Thyroid gland (tissue), 4 donors: ENCODE measurements at regions of chr15 and their contacts with region 1.

Region 1: DNA sequence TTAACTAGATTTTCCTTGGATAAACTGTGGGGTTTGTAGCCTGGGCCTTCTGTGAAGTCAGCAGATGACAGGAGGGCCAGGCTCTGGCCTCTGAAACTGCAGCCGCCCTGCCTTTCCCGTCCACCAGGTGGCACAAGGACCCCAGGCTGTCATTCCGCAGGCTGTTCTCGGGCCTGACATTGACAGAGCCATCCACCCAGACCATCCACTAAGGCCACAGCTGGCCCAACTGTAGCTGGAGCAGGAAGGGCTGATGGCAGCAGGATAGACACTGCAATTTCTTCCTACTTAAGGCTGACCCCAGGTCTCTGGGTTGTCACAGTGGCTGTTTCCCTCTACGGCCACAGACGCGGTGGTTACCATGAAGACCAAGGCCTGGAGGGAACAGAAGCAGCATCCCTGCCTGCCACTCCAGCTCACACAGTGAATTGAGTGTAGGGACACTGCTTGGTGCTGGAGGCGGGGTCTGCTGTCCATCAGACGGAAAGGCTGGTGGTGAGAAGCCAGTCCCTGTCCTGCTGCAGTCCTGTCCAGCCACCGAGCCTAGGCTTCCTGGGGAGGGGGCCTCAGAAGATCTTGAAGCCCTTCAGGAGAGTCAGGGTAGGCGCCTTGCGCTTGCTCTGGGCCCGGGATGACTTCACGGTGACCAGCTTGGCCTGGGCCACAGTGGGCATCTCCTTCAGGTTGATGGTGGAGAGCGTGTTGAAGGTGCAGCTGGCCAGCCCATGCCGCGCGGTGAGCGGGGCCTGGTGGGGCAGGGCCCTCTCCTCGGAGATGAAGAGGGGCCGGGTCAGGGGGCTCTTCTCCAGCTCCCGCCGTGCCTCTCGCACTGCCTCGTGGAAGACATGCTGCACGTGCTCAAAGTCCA is 9.4 kb downstream of the SLC51B start:
- DNase-seq: peak; percentile 79 to 82
- H3K4me3 ChIP-seq: no peak overlapping the region
- H3K27ac ChIP-seq: no peak overlapping the region
- H3K4me1 ChIP-seq: peaks cover 0 to 8% of the 10 kb centered on the region in 2 donors
- H3K27me3 ChIP-seq: no peaks in the 10 kb centered on the region
- CTCF ChIP-seq: peak; percentile 66 to 97 (median 90)
- POLR2A ChIP-seq: no peak

Region 2: DNA sequence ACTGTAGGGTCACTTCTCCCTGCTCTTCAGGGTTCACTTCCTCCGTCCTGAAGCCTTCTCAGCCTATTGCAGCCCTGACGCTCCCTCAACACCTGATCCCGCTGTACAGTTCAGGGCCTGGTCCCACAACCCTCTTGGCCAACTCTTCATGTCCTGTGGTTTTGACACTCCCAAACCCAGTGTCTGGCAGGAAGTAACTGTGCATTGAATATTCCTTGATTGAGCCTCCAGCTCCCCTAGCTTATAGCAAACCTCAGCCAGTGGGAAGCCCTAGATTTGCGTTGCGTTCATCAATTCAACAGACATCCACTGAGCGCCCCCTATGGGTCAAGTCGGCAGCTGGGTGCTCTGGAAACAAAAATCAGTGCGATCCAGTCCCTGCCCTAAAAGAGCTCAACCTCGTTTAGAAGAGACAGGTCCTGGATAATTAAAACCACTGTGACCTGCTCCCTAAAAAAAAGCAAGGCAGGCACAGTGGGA is 46.9 kb after region 1 on chr15:
- intact Hi-C with region 1: loop called (anchors 5 kb)
- DNase-seq: peak; percentile 70 to 81
- H3K4me3 ChIP-seq: no peak overlapping the region
- H3K27ac ChIP-seq: no peak overlapping the region
- H3K4me1 ChIP-seq: no peaks in the 10 kb centered on the region
- H3K27me3 ChIP-seq: no peaks in the 10 kb centered on the region
- CTCF ChIP-seq: peak; percentile 63 to 79 (median 74)
- POLR2A ChIP-seq: no peak